ENCODE measurements at regions of chr2 and their contacts with region 1.

Region 1: GRCh38 chr2:3805201-3805939 is 102.0 kb downstream of the DCDC2C start:
- DNase-seq: peak; percentile 54 to 64
- ATAC-seq: peak; percentile 80 to 93
- H3K4me3 ChIP-seq: no peak overlapping the region
- H3K27ac ChIP-seq: no peak overlapping the region
- H3K4me1 ChIP-seq: no peaks in the 10 kb centered on the region; the same call in 2 of the 3 replicates
- CTCF ChIP-seq: peak; percentile 55
- EP300 ChIP-seq: no peak
- POLR2A ChIP-seq: no peak
- RAD21 ChIP-seq: peak; percentile 41 to 48; a peak in 4 of 5 replicates

Region 2: GRCh38 chr2:3827673-3828575 is 22.6 kb after region 1 on chr2:
- CTCF ChIA-PET with region 1: interaction called, 11 read pairs
- POLR2A ChIA-PET with region 1: no interaction called
- DNase-seq: peak; percentile 35 to 60
- ATAC-seq: peak; percentile 61 to 91; a peak in 4 of 6 replicates
- H3K4me3 ChIP-seq: no peak overlapping the region
- H3K27ac ChIP-seq: no peak overlapping the region
- H3K4me1 ChIP-seq: no peaks in the 10 kb centered on the region
- CTCF ChIP-seq: peak; percentile 73
- EP300 ChIP-seq: no peak
- POLR2A ChIP-seq: no peak
- RAD21 ChIP-seq: peak; percentile 52 to 58

Measured in A549 (cell line).